ENCODE measurements at regions of chr16 and their contacts with region 1.

Region 1: DNA sequence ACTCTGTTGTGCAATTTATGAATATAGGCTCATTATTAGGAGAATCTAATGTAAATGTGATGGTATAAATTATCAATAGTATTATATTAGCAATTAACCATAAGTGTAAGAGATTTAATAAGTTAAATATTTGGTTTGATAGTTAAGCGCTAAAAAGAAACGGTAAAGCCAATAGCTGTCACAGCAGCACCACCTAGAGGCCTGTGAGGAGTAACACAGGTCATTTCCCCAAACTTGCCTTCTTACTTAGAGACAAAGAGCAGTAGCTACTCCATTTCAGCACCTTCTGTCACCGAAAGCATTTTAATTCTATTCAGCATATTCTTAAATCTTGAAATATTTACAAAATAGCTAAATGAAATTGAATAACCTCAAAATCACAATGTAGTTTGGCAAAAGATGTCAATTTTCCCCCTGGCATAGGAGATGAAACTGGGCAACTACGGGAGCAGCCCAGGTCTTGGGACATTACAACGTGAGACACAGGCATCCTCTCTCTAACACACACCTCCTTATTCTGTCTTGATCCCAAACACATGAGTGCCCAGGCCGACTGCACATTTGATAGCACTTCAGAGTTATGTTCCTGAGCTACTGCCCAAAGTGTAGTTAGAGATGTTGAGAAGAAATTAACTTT is 14.2 kb upstream of the DYNLRB2 start:
- DNase-seq: peak; percentile 74
- H3K4me3 Mint-ChIP-seq: no peak overlapping the region
- H3K27ac Mint-ChIP-seq: no peak overlapping the region
- H3K4me1 Mint-ChIP-seq: no peaks in the 10 kb centered on the region
- H3K27me3 Mint-ChIP-seq: no peaks in the 10 kb centered on the region

Region 2: DNA sequence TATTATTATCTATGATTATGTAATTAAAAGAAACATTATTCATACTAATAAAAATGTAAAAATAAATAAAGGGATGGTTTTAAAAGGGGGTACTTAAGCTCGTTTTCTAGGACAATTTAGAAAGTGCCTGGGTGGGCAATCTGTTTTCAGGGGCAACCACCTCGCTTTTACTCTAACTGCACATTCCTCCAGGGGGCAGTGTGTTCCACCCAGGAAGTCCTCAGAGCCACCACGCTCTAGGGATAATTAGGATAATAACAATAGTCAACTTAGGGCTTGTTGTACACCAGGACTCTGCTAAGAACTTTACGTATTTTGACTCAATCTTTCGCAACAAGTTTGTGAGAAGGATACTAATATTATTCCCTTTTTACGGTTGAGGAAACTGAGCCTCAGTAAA is 529.3 kb before region 1 on chr16:
- CTCF ChIA-PET with region 1: no interaction called
- intact Hi-C with region 1: loop called (anchors 2 kb)
- DNase-seq: peak; percentile 29
- H3K4me3 Mint-ChIP-seq: no peak overlapping the region
- H3K27ac Mint-ChIP-seq: no peak overlapping the region
- H3K4me1 Mint-ChIP-seq: no peaks in the 10 kb centered on the region
- H3K27me3 Mint-ChIP-seq: peaks cover 5% of the 10 kb centered on the region

Region 3: DNA sequence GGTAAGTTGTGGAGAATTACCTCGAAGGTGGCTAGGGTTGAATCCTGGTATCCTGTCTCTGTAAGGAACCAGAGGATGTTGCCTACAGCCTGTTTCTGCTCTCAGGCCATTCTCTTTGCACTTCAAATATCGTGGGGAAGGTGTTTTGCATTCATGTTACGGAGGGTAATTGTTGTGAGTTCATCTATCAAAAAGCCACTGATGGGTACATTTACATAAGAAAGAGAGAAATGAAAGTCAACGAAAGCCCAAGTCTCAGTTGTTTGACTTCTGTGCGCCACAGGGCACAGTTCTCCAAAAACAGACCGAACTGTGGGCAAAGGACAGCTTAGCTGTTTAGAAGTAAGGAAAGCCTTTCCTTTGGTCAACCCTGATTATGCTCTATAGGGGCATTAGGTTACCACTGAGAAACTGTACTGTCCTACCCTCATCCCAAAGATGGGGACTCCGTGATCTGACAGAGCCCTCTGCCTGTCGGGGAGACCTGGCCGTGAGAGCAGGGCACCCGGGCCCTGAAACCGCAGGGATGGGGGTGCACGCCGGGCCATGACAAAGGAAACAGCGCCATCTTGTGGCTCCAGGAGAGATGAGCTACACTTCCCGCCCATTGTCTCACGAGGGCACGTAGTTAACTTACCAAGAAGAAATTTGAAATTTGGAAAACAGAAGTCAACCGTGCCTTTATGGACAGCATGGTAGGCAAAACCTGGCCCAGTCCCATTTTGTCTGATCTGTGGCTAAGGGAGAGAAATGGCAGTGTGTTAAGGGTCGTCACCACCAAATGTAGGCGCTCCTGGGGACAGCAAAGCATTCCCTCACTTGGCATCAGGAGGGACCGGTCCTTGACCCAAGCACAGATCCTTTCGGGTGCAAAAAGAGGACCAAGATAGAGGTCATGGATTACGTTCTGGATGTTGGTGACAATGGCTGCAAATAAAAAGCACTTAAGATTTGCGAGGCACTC is 60.2 kb before region 1 on chr16:
- CTCF ChIA-PET with region 1: interaction called, 16 read pairs
- intact Hi-C with region 1: loop called (anchors 1 kb)
- DNase-seq: peak; percentile 68
- H3K4me3 Mint-ChIP-seq: no peak overlapping the region
- H3K27ac Mint-ChIP-seq: no peak overlapping the region
- H3K4me1 Mint-ChIP-seq: no peaks in the 10 kb centered on the region
- H3K27me3 Mint-ChIP-seq: no peaks in the 10 kb centered on the region

Region 4: DNA sequence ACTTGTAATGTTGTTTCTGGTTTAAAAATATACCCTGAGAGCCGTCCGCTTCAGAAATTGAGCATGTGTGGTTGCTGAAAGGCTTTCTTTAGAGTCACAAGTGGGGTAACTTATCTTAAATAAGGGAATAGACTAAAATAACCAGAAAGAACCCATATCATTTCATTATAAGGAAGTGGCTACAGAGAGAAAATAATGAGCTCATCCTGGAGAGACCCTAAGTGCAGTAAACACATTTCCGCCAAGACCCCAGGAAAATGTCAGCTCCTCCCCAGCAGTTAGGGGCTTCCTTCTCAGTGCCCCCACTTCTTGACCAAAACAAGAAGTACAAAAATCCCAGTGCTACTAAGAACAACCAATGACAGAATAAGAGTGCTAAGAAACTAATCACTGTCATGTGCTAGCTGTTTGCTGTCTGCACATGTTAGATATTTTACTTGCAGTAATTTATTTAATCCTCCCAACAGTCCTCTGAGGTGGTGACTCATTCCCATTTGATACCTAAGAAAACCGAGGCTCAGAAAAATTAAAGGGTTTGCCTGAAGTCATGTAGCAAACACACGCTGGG is 194.3 kb after region 1 on chr16:
- CTCF ChIA-PET with region 1: no interaction called
- intact Hi-C with region 1: loop called (anchors 5 kb)
- DNase-seq: no peak
- H3K4me3 Mint-ChIP-seq: no peak overlapping the region
- H3K27ac Mint-ChIP-seq: no peak overlapping the region
- H3K4me1 Mint-ChIP-seq: peaks cover 20% of the 10 kb centered on the region
- H3K27me3 Mint-ChIP-seq: no peaks in the 10 kb centered on the region

Region 5: GRCh38 chr16:80784951-80785350 is 258.4 kb after region 1 on chr16:
- CTCF ChIA-PET with region 1: no interaction called
- intact Hi-C with region 1: no loop called
- DNase-seq: no peak
- H3K4me3 Mint-ChIP-seq: no peak overlapping the region
- H3K27ac Mint-ChIP-seq: no peak overlapping the region
- H3K4me1 Mint-ChIP-seq: no peaks in the 10 kb centered on the region
- H3K27me3 Mint-ChIP-seq: no peaks in the 10 kb centered on the region

Region 6: DNA sequence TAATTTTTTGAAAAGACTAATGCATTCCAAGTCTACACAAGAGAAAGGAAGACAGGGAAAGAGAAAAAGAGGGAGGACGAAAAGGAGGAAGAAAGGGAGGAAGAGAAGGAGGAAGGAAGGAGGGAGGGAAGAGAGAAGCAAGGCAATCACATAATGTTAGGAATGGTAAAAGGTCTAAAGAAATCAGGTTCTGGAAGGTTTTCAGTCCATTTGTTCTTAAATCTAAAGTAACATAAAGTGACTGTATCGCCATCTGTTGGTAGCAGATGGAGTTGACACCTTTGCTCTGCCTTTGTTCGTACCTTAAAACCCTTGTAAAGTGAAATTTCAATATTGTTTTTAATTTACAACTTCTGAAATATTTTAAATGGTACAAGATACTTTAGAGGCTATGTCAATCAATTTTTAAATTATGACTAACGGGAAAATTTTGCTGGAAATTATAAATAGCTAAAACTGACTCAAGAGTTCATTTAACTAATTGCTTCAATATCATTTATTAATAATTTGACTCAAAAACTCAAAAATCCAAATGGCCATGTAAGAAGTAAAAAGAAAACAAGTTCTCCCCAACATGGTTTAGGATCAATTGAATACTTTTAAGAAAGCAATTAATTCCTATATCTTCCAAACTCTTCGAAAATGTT is 298.3 kb after region 1 on chr16:
- CTCF ChIA-PET with region 1: interaction called, 65 read pairs
- intact Hi-C with region 1: loop called (anchors 1 kb)
- DNase-seq: peak; percentile 72
- H3K4me3 Mint-ChIP-seq: no peak overlapping the region
- H3K27ac Mint-ChIP-seq: no peak overlapping the region
- H3K4me1 Mint-ChIP-seq: no peaks in the 10 kb centered on the region
- H3K27me3 Mint-ChIP-seq: no peaks in the 10 kb centered on the region

Region 7: GRCh38 chr16:80948886-80949493 is 422.4 kb after region 1 on chr16:
- CTCF ChIA-PET with region 1: interaction called, 3 read pairs
- intact Hi-C with region 1: loop called (anchors 5 kb)
- DNase-seq: peak; percentile 62
- H3K4me3 Mint-ChIP-seq: no peak overlapping the region
- H3K27ac Mint-ChIP-seq: no peak overlapping the region
- H3K4me1 Mint-ChIP-seq: peaks cover 4% of the 10 kb centered on the region
- H3K27me3 Mint-ChIP-seq: peaks cover 9% of the 10 kb centered on the region

Measured in activated naive CD4-positive, alpha-beta T cell treated with anti-CD3 and anti-CD28 coated beads for 36 hours (primary cell).